Activated CD8-positive, alpha-beta T cell treated with anti-CD3 and anti-CD28 coated beads, Interleukin-2, amount 10 ng/mL, durations not matched to agents 7 days and 5 days (primary cell): ENCODE measurements at regions of chr1 and their contacts with region 1.

Region 1: GRCh38 chr1:33094971-33095604 is 14.1 kb downstream of the AZIN2 start:
- DNase-seq: no peak
- ATAC-seq: no peak
- H3K4me3 Mint-ChIP-seq: no peak overlapping the region
- H3K27ac Mint-ChIP-seq: no peak overlapping the region
- H3K4me1 Mint-ChIP-seq: peaks cover 85% of the 10 kb centered on the region
- H3K27me3 Mint-ChIP-seq: no peaks in the 10 kb centered on the region

Region 2: GRCh38 chr1:33036041-33036525 is 59.0 kb before region 1 on chr1:
- CTCF ChIA-PET with region 1: no interaction called
- POLR2A ChIA-PET with region 1: no interaction called
- DNase-seq: peak; percentile 29
- ATAC-seq: peak; percentile 1
- H3K4me3 Mint-ChIP-seq: peak overlapping the region; percentile 91
- H3K27ac Mint-ChIP-seq: peak overlapping the region; percentile 88
- H3K4me1 Mint-ChIP-seq: peaks cover 52% of the 10 kb centered on the region
- H3K27me3 Mint-ChIP-seq: no peaks in the 10 kb centered on the region

Region 3: GRCh38 chr1:33080885-33081553 is 14.1 kb before region 1 on chr1 and contains the start of gene AZIN2:
- CTCF ChIA-PET with region 1: interaction called, 32 read pairs
- POLR2A ChIA-PET with region 1: no interaction called
- DNase-seq: peak; percentile 98
- ATAC-seq: peak; percentile 97
- H3K4me3 Mint-ChIP-seq: peak within 1 kb of the TSS; percentile 78
- H3K27ac Mint-ChIP-seq: no peak within 1 kb of the TSS
- H3K4me1 Mint-ChIP-seq: peaks cover 34% of the 10 kb centered on the region
- H3K27me3 Mint-ChIP-seq: peaks cover 7% of the 10 kb centered on the region
- total RNA-seq, gene AZIN2: 11.0 to 12.0 TPM

Region 4: DNA sequence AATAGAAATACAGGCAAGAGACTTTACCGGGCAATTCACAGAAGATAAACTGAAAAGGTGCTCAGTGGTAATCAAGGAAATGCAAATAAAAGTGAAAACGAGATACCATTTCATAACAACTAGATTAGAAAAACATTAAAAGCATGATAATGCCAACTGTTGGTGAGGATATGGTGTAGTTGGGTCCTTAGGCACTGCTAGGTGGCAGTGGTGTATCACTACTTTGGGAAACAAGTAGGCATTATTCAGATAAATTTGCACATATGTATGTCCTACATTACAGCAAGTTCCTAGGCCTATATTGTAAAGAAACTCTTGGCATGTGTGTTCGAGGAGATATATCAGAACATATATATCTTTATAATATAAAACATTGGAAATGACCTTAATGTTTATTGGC is 16.9 kb after region 1 on chr1:
- CTCF ChIA-PET with region 1: interaction called, 18 read pairs
- POLR2A ChIA-PET with region 1: interaction called, 3 read pairs
- DNase-seq: no peak
- ATAC-seq: peak; percentile 55
- H3K4me3 Mint-ChIP-seq: no peak overlapping the region
- H3K27ac Mint-ChIP-seq: peak overlapping the region; percentile 5
- H3K4me1 Mint-ChIP-seq: peaks cover 14% of the 10 kb centered on the region
- H3K27me3 Mint-ChIP-seq: no peaks in the 10 kb centered on the region

Region 5: DNA sequence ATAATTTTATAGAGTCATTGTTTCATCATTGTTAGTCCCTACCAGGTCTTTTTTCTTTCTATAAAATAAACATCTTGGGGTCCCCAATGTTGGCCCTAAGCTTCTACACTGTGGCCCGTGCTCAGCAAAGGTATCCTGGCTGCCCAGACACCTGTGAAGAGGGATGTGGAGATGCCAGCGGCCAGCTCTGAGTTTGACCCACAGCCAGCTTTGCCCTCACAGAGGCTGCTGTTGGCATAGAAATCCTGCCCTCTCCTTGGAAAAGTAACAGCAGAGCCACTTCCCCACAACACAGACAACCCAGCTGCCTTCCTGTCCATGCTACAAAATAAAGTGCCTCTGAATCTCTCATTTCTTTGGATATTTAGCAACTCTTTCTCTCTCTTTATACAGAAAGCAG is 80.8 kb after region 1 on chr1:
- CTCF ChIA-PET with region 1: no interaction called
- POLR2A ChIA-PET with region 1: no interaction called
- DNase-seq: no peak
- ATAC-seq: no peak
- H3K4me3 Mint-ChIP-seq: no peak overlapping the region
- H3K27ac Mint-ChIP-seq: no peak overlapping the region
- H3K4me1 Mint-ChIP-seq: peaks cover 14% of the 10 kb centered on the region
- H3K27me3 Mint-ChIP-seq: no peaks in the 10 kb centered on the region